GM10248 (cell line): ENCODE measurements at regions of chr6 and their contacts with region 1.

Region 1: DNA sequence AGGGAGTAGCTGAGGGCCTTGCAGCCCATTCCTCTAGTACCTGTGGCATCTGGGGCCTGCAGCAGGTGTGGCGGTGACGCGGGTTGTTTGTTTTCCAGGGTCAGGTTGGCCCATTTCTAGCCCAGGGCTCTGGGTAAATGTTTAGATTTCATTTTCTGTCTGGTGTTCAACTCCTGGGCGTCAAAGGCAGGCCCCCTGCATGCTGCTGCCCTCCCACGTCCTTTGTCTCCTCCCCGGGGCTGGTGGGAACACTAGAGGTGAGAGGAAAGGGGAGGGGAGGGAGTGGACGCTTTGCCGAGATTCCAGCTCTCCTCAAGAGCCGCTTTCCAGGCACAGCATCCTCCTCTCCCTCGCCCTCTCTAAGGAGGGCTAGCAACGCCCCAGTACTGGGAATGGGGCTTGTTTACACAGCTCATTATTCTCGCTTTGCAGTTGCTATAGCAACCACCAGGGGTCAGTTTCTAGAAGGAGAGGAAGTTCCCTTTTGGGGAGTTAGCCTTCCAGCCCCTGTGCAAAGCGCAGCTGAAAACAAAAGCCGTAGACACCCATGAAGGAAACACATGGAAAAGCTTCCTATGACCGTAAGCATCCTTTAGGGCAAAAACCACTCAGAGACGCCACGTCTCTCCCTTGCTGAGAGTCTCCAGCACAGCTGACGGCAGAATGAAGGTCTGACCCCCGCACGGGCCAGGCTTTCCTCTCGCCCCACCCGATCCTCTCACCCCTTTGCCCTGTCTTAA is 170.6 kb downstream of the LY86 start:
- DNase-seq: peak; percentile 81
- CTCF ChIP-seq: peak; percentile 35

Region 2: DNA sequence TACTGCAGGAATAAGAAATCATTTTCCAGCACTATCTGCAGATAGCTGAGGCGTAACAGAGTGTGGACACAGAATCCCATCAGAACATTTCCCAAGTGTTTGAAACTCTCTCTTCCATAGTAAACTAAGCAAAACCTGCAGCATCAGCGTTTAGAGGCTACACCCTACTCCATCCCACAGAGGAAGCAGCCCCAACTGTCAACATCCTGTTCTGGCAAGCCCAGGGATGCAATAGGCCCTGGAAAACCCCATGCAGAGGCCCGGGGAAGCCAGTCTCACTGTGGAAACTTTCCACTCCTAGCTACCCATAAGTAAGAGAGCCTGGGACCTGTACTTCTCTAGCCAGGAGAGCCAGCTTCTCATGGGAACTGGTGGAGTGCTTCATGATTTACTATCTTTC is 41.1 kb before region 1 on chr6:
- CTCF ChIA-PET with region 1: no interaction called
- POLR2A ChIA-PET with region 1: no interaction called
- DNase-seq: no peak
- CTCF ChIP-seq: no peak

Region 3: GRCh38 chr6:6769466-6769865 is 10.4 kb after region 1 on chr6:
- CTCF ChIA-PET with region 1: interaction called, 10 read pairs
- POLR2A ChIA-PET with region 1: no interaction called
- DNase-seq: no peak
- CTCF ChIP-seq: no peak